Vagina (tissue), 2 donors: ENCODE measurements at regions of chr15 and their contacts with region 1.

Region 1: GRCh38 chr15:94070356-94071295 is 160.7 kb upstream of the MCTP2 start:
- DNase-seq: no peak
- H3K4me3 ChIP-seq: peak overlapping the region; percentile 21 to 40
- H3K27ac ChIP-seq: peak overlapping the region; percentile 46
- H3K4me1 ChIP-seq: peaks cover 13% of the 10 kb centered on the region
- H3K27me3 ChIP-seq: no peaks in the 10 kb centered on the region
- CTCF ChIP-seq: no peak
- POLR2A ChIP-seq: no peak

Region 2: GRCh38 chr15:94097552-94097951 is 26.9 kb after region 1 on chr15:
- intact Hi-C with region 1: loop called (anchors 1 kb)
- DNase-seq: no peak
- H3K4me3 ChIP-seq: no peak overlapping the region
- H3K27ac ChIP-seq: no peak overlapping the region
- H3K4me1 ChIP-seq: no peaks in the 10 kb centered on the region
- H3K27me3 ChIP-seq: no peaks in the 10 kb centered on the region
- CTCF ChIP-seq: no peak
- POLR2A ChIP-seq: no peak